Heart left ventricle (tissue), 16 donors: ENCODE measurements at regions of chr14 and their contacts with region 1.

Region 1: GRCh38 chr14:66982247-66982646 is 207.0 kb upstream of the GARIN2 start:
- DNase-seq: no peak
- ATAC-seq: no peak
- H3K4me3 ChIP-seq: no peak overlapping the region
- H3K27ac ChIP-seq: no peak overlapping the region
- H3K4me1 ChIP-seq: no peaks in the 10 kb centered on the region
- H3K27me3 ChIP-seq: no peaks in the 10 kb centered on the region
- CTCF ChIP-seq: no peak
- POLR2A ChIP-seq: no peak

Region 2: DNA sequence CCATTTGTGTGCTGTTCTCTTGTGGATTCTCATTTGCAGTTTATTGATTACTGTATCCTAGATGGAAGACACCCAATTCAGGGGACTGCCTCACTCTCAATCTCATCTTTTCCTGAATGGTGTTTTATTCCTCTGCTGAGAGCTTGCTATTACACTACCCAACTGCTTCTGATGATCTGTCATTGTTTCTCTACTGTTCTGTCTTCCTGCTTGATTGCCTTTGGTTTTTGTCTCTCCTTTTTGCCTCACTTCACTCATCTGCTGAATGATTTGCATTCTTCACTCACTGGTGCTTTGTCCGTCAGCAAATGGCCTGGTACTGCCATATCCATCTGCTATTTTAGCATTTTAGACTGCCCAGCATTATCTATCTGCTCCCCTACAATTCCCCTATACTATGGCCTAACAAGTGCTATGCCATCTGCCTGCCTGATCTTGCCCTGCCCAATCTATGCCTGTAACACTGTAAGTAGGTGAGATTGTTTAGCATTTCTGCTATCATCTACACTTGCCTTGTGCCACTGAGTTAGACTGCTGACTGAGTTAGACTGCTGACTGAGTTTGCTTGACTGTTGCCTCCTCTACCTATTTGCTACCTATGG is 139.2 kb before region 1 on chr14:
- intact Hi-C with region 1: no loop called
- DNase-seq: no peak
- ATAC-seq: no peak
- H3K4me3 ChIP-seq: no peak overlapping the region
- H3K27ac ChIP-seq: no peak overlapping the region
- H3K4me1 ChIP-seq: no peaks in the 10 kb centered on the region
- H3K27me3 ChIP-seq: no peaks in the 10 kb centered on the region
- CTCF ChIP-seq: no peak
- POLR2A ChIP-seq: no peak

Region 3: DNA sequence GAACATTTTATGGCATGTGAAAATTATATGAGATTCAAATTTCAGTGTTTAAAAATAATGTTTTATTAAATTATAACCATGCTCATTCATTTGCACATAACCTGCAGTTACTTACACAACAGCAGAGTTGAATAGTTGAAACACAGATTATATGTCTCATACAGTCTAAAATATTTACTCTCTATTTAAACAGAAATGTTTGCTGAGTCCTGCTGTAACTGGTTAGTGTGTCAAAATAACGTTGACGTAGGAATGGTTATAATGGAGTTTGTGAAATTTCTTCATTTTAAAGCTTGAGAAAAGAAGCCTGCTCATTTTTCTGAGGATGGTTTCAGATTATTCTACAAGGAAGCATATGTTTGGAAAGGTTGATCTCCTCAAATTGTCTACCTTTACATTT is 10.5 kb after region 1 on chr14:
- intact Hi-C with region 1: loop called in 1 of 10 experiments (anchors 1 kb)
- DNase-seq: no peak
- ATAC-seq: no peak
- H3K4me3 ChIP-seq: no peak overlapping the region
- H3K27ac ChIP-seq: no peak overlapping the region
- H3K4me1 ChIP-seq: no peaks in the 10 kb centered on the region
- H3K27me3 ChIP-seq: no peaks in the 10 kb centered on the region
- CTCF ChIP-seq: no peak
- POLR2A ChIP-seq: no peak